ENCODE measurements at regions of chr4 and their contacts with region 1.

Region 1: DNA sequence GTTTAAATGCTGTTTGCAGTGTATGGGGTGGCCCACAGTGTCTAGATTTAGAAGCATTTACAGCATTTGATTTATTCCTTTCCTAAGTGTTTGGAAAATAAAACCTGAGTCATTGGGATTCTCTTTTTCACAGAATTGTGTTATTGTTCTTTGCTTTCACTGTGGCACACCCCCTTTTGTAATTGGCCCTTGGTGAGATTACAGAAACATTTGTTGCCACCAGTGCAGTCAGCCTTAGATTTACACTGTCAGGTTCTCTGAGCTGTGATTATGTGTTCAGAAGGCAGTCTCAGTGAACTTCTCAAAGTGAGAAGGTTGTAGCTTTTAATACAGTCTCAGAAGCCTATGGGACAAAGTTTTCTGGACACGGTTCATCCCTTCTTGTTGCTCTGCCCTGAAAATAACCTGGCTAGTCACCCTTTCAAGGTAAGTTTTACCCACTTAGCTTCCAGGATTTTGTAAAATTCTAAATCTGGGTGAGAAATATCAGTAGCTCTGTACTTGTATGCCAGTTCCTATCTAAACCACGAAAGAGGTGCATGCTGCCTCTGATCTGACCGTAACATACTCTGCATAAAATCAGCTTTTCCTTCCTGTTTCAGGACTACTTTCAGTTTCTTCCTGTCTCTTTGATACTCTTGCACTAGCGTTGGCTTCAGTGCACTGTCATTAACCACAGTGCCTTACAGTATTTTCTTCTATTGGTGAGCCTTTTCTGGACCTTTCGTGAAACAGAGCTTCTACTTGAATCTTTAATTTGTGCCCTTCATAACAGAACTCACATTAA is 12.6 kb downstream of the RUFY3 start:
- DNase-seq: peak; percentile 70
- ATAC-seq: peak; percentile 93
- H3K4me3 Mint-ChIP-seq: peak overlapping the region; percentile 79
- H3K27ac Mint-ChIP-seq: peak overlapping the region; percentile 91
- H3K4me1 Mint-ChIP-seq: peaks cover 52% of the 10 kb centered on the region
- H3K27me3 Mint-ChIP-seq: no peaks in the 10 kb centered on the region

Region 2: GRCh38 chr4:70678383-70678999 is 55.9 kb before region 1 on chr4:
- CTCF ChIA-PET with region 1: interaction called, 18 read pairs
- POLR2A ChIA-PET with region 1: interaction called, 4 read pairs
- DNase-seq: peak; percentile 37
- ATAC-seq: peak; percentile 69
- H3K4me3 Mint-ChIP-seq: peak overlapping the region; percentile 44
- H3K27ac Mint-ChIP-seq: peak overlapping the region; percentile 80
- H3K4me1 Mint-ChIP-seq: peaks cover 53% of the 10 kb centered on the region
- H3K27me3 Mint-ChIP-seq: peaks cover 3% of the 10 kb centered on the region

Region 3: GRCh38 chr4:70704331-70705145 is 29.8 kb before region 1 on chr4:
- CTCF ChIA-PET with region 1: interaction called, 90 read pairs
- POLR2A ChIA-PET with region 1: interaction called, 14 read pairs
- DNase-seq: peak; percentile 69
- ATAC-seq: peak; percentile 59
- H3K4me3 Mint-ChIP-seq: peak overlapping the region; percentile 91
- H3K27ac Mint-ChIP-seq: peak overlapping the region; percentile 91
- H3K4me1 Mint-ChIP-seq: peaks cover 23% of the 10 kb centered on the region
- H3K27me3 Mint-ChIP-seq: no peaks in the 10 kb centered on the region

Region 4: DNA sequence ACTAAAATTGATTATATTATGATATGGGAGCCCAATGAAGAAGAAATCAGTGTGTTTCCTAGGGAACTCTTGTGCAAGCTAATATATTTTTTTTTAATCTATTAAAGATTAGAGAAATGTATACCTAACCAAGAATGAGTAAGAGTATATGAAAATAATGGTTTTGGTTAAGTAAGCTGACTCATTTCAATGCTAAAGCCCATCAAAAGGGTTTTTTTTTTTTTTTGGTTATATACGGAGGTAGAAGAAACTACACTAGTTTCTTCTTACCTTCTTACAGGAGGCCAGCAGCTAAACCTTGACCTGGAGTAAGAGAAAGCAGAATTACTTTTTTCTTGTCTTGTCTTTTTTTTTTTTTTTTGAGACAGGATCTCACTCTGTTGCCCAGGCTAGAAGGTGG is 15.0 kb after region 1 on chr4:
- CTCF ChIA-PET with region 1: interaction called, 16 read pairs
- POLR2A ChIA-PET with region 1: interaction called, 5 read pairs
- DNase-seq: no peak
- ATAC-seq: no peak
- H3K4me3 Mint-ChIP-seq: no peak overlapping the region
- H3K27ac Mint-ChIP-seq: no peak overlapping the region
- H3K4me1 Mint-ChIP-seq: peaks cover 7% of the 10 kb centered on the region
- H3K27me3 Mint-ChIP-seq: no peaks in the 10 kb centered on the region

Region 5: DNA sequence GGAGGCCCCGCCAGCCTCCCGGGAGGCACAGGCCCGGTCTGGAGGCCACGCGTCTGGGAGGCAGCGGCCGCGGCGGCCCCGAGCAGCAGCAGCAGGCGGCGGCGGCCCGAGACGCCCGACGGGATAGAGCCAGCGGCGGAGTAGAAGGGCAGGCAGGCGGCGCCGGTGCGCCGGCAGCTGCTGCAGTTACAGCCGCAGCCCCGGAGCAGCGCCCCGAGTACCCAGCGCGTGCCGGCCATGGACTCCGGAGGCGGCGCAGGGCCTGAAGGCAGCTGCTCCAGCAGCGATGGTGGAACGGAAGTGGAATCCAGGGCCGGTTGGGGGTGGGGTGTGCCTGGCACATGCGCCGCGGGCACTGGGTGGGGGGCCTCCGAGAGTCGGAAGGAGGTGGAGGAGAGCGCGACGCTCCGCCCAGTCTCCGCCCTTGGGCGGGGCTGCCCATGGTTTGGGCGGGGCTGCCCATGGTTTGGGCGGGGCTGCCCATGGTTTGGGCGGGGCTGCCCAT is 105.3 kb after region 1 on chr4 and contains the start of gene GRSF1:
- CTCF ChIA-PET with region 1: interaction called, 46 read pairs
- POLR2A ChIA-PET with region 1: interaction called, 25 read pairs
- DNase-seq: peak; percentile 96
- ATAC-seq: peak; percentile 91
- H3K4me3 Mint-ChIP-seq: peak within 1 kb of the TSS; percentile 97
- H3K27ac Mint-ChIP-seq: peak within 1 kb of the TSS; percentile 97
- H3K4me1 Mint-ChIP-seq: peaks cover 34% of the 10 kb centered on the region
- H3K27me3 Mint-ChIP-seq: no peaks in the 10 kb centered on the region
- total RNA-seq, gene GRSF1: 67.9 to 69.2 TPM

Region 6: GRCh38 chr4:70915036-70915815 is 180.9 kb after region 1 on chr4:
- CTCF ChIA-PET with region 1: no interaction called
- POLR2A ChIA-PET with region 1: no interaction called
- DNase-seq: no peak
- ATAC-seq: no peak
- H3K4me3 Mint-ChIP-seq: no peak overlapping the region
- H3K27ac Mint-ChIP-seq: no peak overlapping the region
- H3K4me1 Mint-ChIP-seq: no peaks in the 10 kb centered on the region
- H3K27me3 Mint-ChIP-seq: no peaks in the 10 kb centered on the region

Region 7: DNA sequence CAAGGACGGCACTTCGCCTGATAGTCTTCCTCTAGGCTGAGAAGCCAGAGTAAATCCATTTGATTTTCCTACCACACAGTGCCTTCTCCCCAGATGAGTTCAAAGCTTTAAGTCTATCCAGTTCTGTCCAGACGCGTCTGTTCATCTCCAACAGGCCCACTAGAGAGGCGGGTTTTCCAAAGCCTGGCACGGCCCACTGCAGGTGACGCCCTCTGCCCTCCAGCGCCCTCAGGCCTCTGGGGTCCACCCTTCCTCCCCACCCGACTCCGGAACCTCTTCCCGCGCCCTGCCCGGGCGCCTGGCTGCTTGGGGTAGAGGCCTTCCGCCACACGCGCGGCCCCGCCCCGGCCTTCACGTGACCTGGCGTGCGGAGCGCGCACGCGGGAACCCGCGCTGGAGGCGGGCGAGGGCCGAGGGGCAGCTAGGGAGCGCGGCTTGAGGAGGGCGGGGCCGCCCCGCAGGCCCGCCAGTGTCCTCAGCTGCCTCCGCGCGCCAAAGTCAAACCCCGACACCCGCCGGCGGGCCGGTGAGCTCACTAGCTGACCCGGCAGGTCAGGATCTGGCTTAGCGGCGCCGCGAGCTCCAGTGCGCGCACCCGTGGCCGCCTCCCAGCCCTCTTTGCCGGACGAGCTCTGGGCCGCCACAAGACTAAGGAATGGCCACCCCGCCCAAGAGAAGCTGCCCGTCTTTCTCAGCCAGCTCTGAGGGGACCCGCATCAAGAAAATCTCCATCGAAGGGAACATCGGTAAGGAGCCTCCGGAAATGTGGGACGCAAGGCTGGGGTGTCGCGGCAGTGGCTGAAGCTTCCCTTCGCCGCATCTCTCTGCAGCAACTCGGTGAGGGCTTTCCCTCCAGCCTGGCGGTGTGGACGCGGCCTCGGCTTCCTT is 259.1 kb after region 1 on chr4 and contains the start of gene DCK:
- CTCF ChIA-PET with region 1: interaction called, 19 read pairs
- POLR2A ChIA-PET with region 1: interaction called, 5 read pairs
- DNase-seq: peak; percentile 86
- ATAC-seq: peak; percentile 86
- H3K4me3 Mint-ChIP-seq: peak within 1 kb of the TSS; percentile 96
- H3K27ac Mint-ChIP-seq: peak within 1 kb of the TSS; percentile 88
- H3K4me1 Mint-ChIP-seq: peaks cover 38% of the 10 kb centered on the region
- H3K27me3 Mint-ChIP-seq: no peaks in the 10 kb centered on the region
- total RNA-seq, gene DCK: 74.2 to 77.3 TPM

Region 8: GRCh38 chr4:71095545-71095944 is 361.2 kb after region 1 on chr4:
- CTCF ChIA-PET with region 1: no interaction called
- POLR2A ChIA-PET with region 1: no interaction called
- DNase-seq: no peak
- ATAC-seq: peak; percentile 67
- H3K4me3 Mint-ChIP-seq: peak overlapping the region; percentile 51
- H3K27ac Mint-ChIP-seq: peak overlapping the region; percentile 69
- H3K4me1 Mint-ChIP-seq: peaks cover 10% of the 10 kb centered on the region
- H3K27me3 Mint-ChIP-seq: peaks cover 6% of the 10 kb centered on the region